Caco-2 (cell line): ENCODE measurements at regions of chr19 and their contacts with region 1.

Region 1: DNA sequence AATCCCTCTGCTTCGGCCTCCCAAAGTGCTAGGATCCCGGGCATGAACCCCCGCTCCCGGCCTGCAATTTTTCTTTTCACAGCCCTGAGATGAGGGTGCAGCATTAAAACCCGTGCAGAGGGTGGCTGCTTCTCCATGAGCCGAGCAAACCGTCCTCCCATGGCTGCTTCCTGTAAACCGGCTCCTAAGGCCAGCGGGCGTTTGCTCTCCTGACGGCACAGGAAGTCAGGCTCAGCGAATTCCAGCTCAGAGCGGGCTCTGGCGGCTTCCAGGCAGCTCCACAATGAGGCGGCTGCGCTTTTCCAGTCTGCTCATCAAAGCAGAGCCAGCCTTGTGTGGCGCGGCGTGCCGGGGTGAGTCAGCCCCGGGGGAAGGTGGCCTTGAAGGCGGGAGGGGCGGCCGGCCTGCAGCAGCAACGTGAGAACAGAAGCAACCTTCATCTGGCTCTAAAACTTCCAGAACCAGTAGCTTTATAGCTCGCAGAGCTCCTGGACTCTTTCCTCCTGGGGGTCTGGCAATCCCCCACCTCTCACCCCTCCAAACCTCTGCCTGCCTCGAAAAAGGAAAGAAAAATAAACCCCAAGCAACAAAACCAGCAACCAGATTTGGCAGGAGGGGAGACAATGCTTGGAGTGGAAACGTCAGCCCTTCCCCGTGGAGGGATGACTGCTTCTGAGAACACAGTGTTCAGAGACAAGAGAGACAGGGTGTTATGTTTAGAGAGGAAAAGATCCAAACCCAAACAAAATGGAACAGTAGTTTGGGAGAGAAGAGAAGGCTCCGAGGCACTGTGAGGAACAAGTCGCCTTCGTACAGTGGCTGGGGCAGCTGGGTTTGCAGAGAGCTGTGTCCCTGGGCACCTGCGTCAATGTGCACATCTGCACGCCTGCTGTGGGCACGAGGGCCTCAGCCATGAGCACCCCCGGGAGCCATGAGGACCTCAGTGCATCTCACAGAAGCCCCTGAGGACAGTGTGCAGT is 67.8 kb downstream of the GADD45B start:
- DNase-seq: peak; percentile 92 to 94
- H3K4me3 ChIP-seq: no peak overlapping the region
- H3K4me3 Mint-ChIP-seq: peak overlapping the region; percentile 63
- H3K27ac Mint-ChIP-seq: peak overlapping the region; percentile 95
- H3K4me1 ChIP-seq: peaks cover 52% of the 10 kb centered on the region
- H3K4me1 Mint-ChIP-seq: peaks cover 28% of the 10 kb centered on the region
- H3K27me3 ChIP-seq: no peaks in the 10 kb centered on the region
- H3K27me3 Mint-ChIP-seq: no peaks in the 10 kb centered on the region
- CTCF ChIP-seq: peak in 1 of 2 experiments; percentile 46

Region 2: GRCh38 chr19:1295169-1296012 is 1248.4 kb before region 1 on chr19:
- CTCF ChIA-PET with region 1: no interaction called
- POLR2A ChIA-PET with region 1: no interaction called
- intact Hi-C with region 1: loop called (anchors 10 kb)
- DNase-seq: peak in 1 of 2 experiments; percentile 38
- H3K4me3 ChIP-seq: no peak overlapping the region
- H3K4me3 Mint-ChIP-seq: no peak overlapping the region
- H3K27ac Mint-ChIP-seq: no peak overlapping the region
- H3K4me1 ChIP-seq: peaks cover 17% of the 10 kb centered on the region
- H3K4me1 Mint-ChIP-seq: no peaks in the 10 kb centered on the region
- H3K27me3 ChIP-seq: no peaks in the 10 kb centered on the region
- H3K27me3 Mint-ChIP-seq: no peaks in the 10 kb centered on the region
- CTCF ChIP-seq: no peak

Region 3: DNA sequence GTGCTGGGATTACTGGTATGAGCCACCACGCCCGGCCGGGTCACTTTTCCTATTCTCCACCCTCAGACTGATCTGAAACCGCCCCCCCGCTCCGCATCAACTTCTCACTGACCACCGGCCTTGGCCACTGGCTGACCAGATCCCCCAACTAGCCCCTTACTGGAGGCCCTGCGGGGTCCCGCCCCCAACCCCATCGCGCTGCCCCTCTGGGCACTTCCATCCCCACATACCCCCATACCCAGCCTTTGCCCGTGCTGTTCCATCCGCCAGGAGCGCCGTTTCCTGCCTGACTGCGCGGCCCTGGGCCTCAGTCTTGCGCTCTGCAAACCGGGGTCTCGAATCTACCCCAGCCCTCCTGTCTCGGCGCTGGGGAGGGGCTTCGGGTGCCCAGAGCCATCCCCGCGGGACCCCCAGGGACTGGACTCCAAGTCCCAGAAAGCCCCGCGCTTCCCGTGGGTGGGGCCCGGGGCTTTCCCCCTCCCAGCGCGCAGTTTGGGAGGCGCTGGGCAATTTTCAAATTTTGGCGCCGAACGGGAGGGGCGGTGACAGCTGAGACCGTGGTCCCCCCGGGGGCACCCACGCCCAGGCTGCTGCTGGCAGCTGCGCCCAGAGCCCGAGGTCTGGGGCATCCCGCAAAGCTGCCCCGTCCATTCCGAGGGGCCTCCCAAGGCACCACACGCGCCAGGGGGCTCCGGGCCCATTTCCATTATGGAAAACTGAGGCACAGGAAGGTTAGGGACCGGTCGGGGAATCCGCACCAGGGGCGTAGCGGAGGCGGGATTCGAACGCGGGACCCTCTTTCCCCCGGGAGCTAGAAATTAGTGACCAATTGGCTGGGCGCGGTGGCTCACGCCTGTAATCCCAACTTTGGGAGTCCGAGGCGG is 81.8 kb before region 1 on chr19:
- CTCF ChIA-PET with region 1: no interaction called
- POLR2A ChIA-PET with region 1: interaction called, 16 read pairs
- intact Hi-C with region 1: no loop called
- DNase-seq: no peak
- H3K4me3 ChIP-seq: no peak overlapping the region
- H3K4me3 Mint-ChIP-seq: peak overlapping the region; percentile 55
- H3K27ac Mint-ChIP-seq: no peak overlapping the region
- H3K4me1 ChIP-seq: no peaks in the 10 kb centered on the region
- H3K4me1 Mint-ChIP-seq: no peaks in the 10 kb centered on the region
- H3K27me3 ChIP-seq: no peaks in the 10 kb centered on the region
- H3K27me3 Mint-ChIP-seq: no peaks in the 10 kb centered on the region
- CTCF ChIP-seq: no peak

Region 4: GRCh38 chr19:2524838-2525723 is 18.7 kb before region 1 on chr19:
- CTCF ChIA-PET with region 1: interaction called, 8 read pairs
- POLR2A ChIA-PET with region 1: interaction called, 30 read pairs
- intact Hi-C with region 1: no loop called
- DNase-seq: peak; percentile 49 to 73
- H3K4me3 ChIP-seq: peak overlapping the region; percentile 9; the same call in 1 of the 2 replicates
- H3K4me3 Mint-ChIP-seq: peak overlapping the region; percentile 24
- H3K27ac Mint-ChIP-seq: peak overlapping the region; percentile 32
- H3K4me1 ChIP-seq: peaks cover 43% of the 10 kb centered on the region
- H3K4me1 Mint-ChIP-seq: peaks cover 6% of the 10 kb centered on the region
- H3K27me3 ChIP-seq: no peaks in the 10 kb centered on the region
- H3K27me3 Mint-ChIP-seq: no peaks in the 10 kb centered on the region
- CTCF ChIP-seq: no peak

Region 5: DNA sequence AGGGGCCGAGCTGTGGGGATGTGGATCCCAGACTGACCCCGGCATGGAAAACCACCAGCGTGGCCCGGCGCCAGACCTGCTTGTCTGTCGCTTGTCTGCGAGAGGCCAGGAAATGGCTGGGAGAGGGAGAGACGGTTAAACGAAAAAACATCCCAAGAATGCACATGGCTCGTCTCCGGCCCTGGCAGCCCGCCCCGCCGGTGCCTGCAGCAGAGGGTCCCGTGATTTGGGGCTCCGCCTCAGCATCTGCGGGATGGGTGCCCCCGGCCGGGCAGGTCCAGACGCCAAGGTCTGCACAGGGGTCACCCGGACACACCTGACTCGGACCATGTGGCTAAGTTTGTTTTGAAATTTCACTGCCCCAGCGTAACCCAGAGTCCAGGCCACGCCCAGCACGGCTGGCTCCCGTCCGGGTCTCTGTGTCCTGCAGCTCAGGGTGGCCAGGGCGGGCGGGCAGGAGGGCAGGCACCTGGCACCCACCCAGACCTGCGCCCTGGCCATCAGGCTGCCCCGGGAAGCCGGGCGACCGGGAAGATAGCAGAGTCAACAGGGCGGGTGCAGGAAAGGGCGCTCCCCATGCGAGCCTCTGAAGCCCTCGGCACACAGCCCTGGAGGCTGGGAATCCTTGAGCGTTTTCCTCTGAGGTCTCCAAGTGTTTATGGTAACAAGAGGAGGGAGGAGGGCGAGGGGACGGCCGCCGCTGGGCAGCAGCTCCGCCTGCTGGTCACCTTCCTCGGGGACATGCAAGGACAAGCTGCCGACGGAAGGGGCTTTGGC is 35.3 kb after region 1 on chr19:
- CTCF ChIA-PET with region 1: interaction called, 22 read pairs
- POLR2A ChIA-PET with region 1: interaction called, 12 read pairs
- intact Hi-C with region 1: loop called (anchors 1 kb)
- DNase-seq: peak; percentile 88 to 89
- H3K4me3 ChIP-seq: peak overlapping the region; percentile 40
- H3K4me3 Mint-ChIP-seq: peak overlapping the region; percentile 70
- H3K27ac Mint-ChIP-seq: peak overlapping the region; percentile 42
- H3K4me1 ChIP-seq: peaks cover 29% of the 10 kb centered on the region
- H3K4me1 Mint-ChIP-seq: no peaks in the 10 kb centered on the region
- H3K27me3 ChIP-seq: no peaks in the 10 kb centered on the region
- H3K27me3 Mint-ChIP-seq: no peaks in the 10 kb centered on the region
- CTCF ChIP-seq: peak; percentile 89 to 94

Region 6: DNA sequence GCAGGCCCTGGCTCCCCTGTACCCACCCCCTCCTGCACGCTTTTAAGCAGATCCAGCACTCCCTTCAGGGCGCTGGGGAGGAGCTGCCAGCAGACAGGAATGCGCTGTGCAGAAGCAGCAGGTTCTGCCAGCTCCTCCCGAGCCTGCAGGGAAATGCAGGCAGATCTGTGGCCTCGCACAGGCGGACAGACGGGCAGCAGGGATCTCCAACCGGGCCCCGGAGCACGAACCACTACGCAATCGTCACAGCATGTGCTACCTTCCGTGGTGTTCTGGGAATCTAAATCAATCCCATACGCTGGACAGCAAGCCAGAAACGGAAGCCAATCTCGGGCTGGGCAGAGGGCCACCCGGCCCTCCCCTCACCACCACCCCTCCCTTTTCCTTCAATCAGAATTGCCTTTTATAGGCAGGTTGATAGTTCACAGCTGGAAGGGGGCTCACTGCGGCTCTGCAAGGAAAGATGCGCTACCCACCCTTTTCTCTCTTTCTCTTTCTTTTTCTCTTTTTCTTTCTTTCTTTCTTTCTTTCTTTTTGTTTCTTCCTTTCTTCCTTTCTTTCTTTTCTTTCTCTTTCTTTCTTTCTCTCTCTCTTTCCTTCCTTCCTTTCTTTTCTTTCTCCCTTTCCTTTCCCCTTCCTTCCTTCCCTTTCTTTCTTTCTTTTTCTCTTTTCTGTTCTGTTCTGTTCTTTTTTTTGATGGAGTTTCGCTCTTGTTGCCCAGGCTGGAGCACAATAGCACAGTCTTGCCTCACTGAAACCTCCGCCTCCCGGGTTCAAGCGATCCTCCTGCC is 58.8 kb after region 1 on chr19:
- CTCF ChIA-PET with region 1: no interaction called
- POLR2A ChIA-PET with region 1: no interaction called
- intact Hi-C with region 1: loop called (anchors 2 kb)
- DNase-seq: peak in 1 of 2 experiments; percentile 52
- H3K4me3 ChIP-seq: no peak overlapping the region
- H3K4me3 Mint-ChIP-seq: no peak overlapping the region
- H3K27ac Mint-ChIP-seq: no peak overlapping the region
- H3K4me1 ChIP-seq: 0 out of 2 replicates have a peak, but pooled peaks cover 3% of the 10 kb centered on the region
- H3K4me1 Mint-ChIP-seq: peaks cover 7% of the 10 kb centered on the region
- H3K27me3 ChIP-seq: no peaks in the 10 kb centered on the region
- H3K27me3 Mint-ChIP-seq: no peaks in the 10 kb centered on the region
- CTCF ChIP-seq: no peak

Region 7: DNA sequence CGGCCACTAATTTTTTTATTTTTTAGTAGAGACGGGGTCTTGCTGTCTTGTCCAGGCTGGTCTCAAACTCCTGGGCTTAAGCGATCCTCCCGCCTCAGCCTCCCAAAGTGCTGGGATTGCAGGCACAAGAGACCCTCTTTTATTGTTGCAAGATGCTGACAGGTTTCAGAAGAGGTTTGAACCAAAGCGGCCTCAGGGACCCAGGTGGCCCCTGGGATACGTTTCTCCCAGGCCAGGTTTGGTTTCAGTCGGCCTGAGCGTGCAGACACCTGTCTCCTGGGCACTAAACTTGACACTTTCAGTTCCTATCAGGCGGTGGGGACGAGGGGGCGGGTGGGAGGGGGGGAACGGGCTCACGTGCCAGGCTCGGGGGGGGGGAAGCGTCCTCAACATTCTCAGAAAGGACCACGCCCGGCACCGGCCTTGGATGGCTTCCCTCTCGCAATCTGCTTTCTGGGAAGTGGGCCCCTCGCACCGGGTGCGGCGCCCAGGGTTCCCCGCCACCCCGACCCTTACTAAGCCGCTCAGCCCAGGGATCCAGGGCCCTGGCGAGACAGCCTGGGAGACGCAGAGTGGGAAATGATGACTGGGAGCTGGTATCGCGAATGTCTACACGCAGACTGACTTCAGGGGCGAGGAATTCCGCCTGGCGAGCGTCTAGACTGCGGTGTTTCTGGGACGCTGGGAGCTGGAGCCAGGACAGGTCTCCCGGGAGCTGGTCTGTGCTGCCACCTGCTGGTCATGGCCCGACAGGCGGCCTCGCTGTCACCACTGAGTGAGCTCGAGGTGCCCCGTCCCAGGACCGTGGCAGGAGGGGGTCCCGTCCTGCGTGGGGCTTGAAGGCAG is 67.1 kb after region 1 on chr19:
- CTCF ChIA-PET with region 1: interaction called, 9 read pairs
- POLR2A ChIA-PET with region 1: no interaction called
- intact Hi-C with region 1: loop called (anchors 5 kb)
- DNase-seq: peak; percentile 87 to 94
- H3K4me3 ChIP-seq: peak overlapping the region; percentile 37
- H3K4me3 Mint-ChIP-seq: peak overlapping the region; percentile 76
- H3K27ac Mint-ChIP-seq: peak overlapping the region; percentile 64
- H3K4me1 ChIP-seq: no peaks in the 10 kb centered on the region
- H3K4me1 Mint-ChIP-seq: no peaks in the 10 kb centered on the region
- H3K27me3 ChIP-seq: no peaks in the 10 kb centered on the region
- H3K27me3 Mint-ChIP-seq: no peaks in the 10 kb centered on the region
- CTCF ChIP-seq: peak; percentile 93 to 95